ENCODE measurements at regions of chr3 and their contacts with region 1.

Region 1: GRCh38 chr3:142929109-142929508 is 34.4 kb downstream of the PAQR9 start:
- DNase-seq: peak; percentile 58
- H3K4me3 ChIP-seq: no peak overlapping the region
- H3K27ac ChIP-seq: no peak overlapping the region
- H3K4me1 ChIP-seq: peaks cover 13% of the 10 kb centered on the region
- H3K27me3 ChIP-seq: no peaks in the 10 kb centered on the region
- CTCF ChIP-seq: peak; percentile 70 to 80

Region 2: DNA sequence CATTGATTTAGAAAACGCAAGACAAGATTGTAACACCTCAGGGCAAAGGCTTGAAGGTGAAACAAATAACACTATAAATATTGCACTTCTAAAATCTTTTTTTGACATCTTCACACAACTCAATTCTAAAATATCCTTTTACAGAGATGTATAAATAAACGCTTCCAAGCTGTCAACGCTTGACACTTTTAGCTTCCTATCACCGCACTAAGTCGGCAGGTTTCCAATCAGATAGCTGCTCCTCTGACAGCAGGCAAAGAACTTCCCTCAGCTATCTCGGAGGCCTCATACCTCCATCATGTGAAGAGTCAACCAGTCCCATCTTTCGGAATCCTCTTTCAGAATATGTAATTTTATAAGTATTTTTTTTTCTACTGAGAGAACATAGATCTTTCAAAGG is 111.2 kb before region 1 on chr3:
- CTCF ChIA-PET with region 1: no interaction called
- dilution Hi-C with region 1: no loop called
- in situ Hi-C with region 1: no loop called
- intact Hi-C with region 1: no loop called
- DNase-seq: no peak
- H3K4me3 ChIP-seq: no peak overlapping the region
- H3K27ac ChIP-seq: no peak overlapping the region
- H3K4me1 ChIP-seq: no peaks in the 10 kb centered on the region
- H3K27me3 ChIP-seq: no peaks in the 10 kb centered on the region
- CTCF ChIP-seq: no peak

Region 3: DNA sequence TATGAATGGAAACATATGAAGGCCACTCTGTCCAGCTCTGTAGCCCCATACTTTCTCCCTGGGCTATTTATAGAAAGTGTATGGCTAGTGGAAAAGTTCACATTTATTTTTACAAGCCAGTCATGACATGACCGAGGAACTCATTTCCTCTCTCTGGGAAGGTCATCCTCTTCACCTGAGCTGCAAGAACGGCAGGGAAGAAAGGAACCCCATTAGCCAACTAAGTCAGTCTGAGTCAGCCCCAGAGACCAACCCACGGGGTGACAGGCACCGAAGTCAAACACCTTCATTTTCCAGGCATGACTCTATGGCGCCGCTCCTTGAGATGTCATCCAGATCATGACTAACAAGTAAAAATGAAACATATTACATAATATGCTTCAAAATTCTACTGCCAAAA is 29.6 kb after region 1 on chr3:
- CTCF ChIA-PET with region 1: no interaction called
- dilution Hi-C with region 1: no loop called
- in situ Hi-C with region 1: no loop called
- intact Hi-C with region 1: loop called (anchors 2 kb)
- DNase-seq: peak; percentile 98
- H3K4me3 ChIP-seq: no peak overlapping the region
- H3K27ac ChIP-seq: peak overlapping the region; percentile 27
- H3K4me1 ChIP-seq: peaks cover 19% of the 10 kb centered on the region
- H3K27me3 ChIP-seq: no peaks in the 10 kb centered on the region
- CTCF ChIP-seq: peak in 1 of 2 donors; percentile 34

Region 4: GRCh38 chr3:142976621-142977398 is 47.7 kb after region 1 on chr3:
- CTCF ChIA-PET with region 1: no interaction called
- dilution Hi-C with region 1: no loop called
- in situ Hi-C with region 1: no loop called
- intact Hi-C with region 1: loop called (anchors 2 kb)
- DNase-seq: peak; percentile 89
- H3K4me3 ChIP-seq: no peak overlapping the region
- H3K27ac ChIP-seq: peak overlapping the region; percentile 1
- H3K4me1 ChIP-seq: peaks cover 14% of the 10 kb centered on the region
- H3K27me3 ChIP-seq: no peaks in the 10 kb centered on the region
- CTCF ChIP-seq: no peak

Region 5: GRCh38 chr3:142987080-142987700 is 58.1 kb after region 1 on chr3:
- CTCF ChIA-PET with region 1: interaction called, 4 read pairs
- dilution Hi-C with region 1: no loop called
- in situ Hi-C with region 1: loop called (anchors 5 to 10 kb)
- intact Hi-C with region 1: loop called (anchors 1 kb)
- DNase-seq: peak; percentile 27
- H3K4me3 ChIP-seq: no peak overlapping the region
- H3K27ac ChIP-seq: no peak overlapping the region
- H3K4me1 ChIP-seq: no peaks in the 10 kb centered on the region
- H3K27me3 ChIP-seq: no peaks in the 10 kb centered on the region
- CTCF ChIP-seq: peak; percentile 55 to 63

Region 6: GRCh38 chr3:142993958-142994442 is 64.9 kb after region 1 on chr3:
- CTCF ChIA-PET with region 1: no interaction called
- dilution Hi-C with region 1: no loop called
- in situ Hi-C with region 1: loop called (anchors 5 to 10 kb)
- intact Hi-C with region 1: loop called (anchors 2 kb)
- DNase-seq: peak; percentile 44
- H3K4me3 ChIP-seq: no peak overlapping the region
- H3K27ac ChIP-seq: no peak overlapping the region
- H3K4me1 ChIP-seq: no peaks in the 10 kb centered on the region
- H3K27me3 ChIP-seq: no peaks in the 10 kb centered on the region
- CTCF ChIP-seq: peak; percentile 66

Region 7: GRCh38 chr3:143850877-143851276 is 921.8 kb after region 1 on chr3:
- CTCF ChIA-PET with region 1: no interaction called
- dilution Hi-C with region 1: no loop called
- in situ Hi-C with region 1: no loop called
- intact Hi-C with region 1: no loop called
- DNase-seq: peak; percentile 51
- H3K4me3 ChIP-seq: no peak overlapping the region
- H3K27ac ChIP-seq: peak overlapping the region; percentile 59
- H3K4me1 ChIP-seq: peaks cover 33% of the 10 kb centered on the region
- H3K27me3 ChIP-seq: no peaks in the 10 kb centered on the region
- CTCF ChIP-seq: no peak